Activated CD4-positive, alpha-beta memory T cell treated with anti-CD3 and anti-CD28 coated beads for 36 hours (primary cell): ENCODE measurements at regions of chr4 and their contacts with region 1.

Region 1: GRCh38 chr4:55407119-55407518 is 11.4 kb downstream of the TMEM165 start:
- DNase-seq: no peak
- H3K4me3 Mint-ChIP-seq: no peak overlapping the region
- H3K27ac Mint-ChIP-seq: no peak overlapping the region
- H3K4me1 Mint-ChIP-seq: peaks cover 41% of the 10 kb centered on the region
- H3K27me3 Mint-ChIP-seq: no peaks in the 10 kb centered on the region

Region 2: DNA sequence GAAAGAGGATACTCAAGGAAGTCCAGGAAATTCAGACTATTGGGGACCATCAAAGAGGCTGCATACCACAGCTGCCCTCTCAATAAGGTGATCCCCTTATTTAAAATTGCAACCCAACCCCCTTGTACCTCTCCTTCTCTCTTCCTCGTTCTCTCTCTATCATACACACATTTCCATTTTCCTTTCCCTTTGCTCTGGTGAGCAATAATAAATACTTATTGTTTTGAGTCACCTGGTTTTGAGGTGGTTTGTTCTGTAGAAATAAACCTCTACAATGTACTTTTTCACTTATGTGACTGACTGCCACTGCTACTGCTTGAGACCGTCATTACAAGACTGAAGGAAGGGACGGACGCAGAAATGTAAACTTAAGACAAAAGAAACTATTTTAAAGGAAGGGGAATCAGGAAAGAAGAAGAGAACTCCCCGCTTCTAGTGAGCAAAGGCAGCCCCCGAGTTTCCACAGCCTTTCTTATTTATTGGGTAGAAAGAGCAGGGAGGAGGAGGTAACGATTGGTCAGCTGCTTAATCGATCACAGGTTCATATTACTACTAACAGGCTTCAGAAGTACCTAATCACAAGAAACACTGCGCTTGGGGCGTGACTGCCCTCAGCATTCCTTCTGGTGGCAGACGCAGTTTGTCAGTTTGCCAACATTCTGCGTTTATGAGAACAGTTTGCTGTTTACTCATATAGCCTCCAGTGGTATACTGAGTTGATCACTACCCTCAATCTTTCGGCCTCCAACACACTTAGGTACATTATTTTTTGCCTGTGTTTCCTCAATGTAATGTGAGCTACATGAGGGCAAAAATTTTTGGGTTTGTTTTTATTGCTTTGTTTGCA is 28.3 kb before region 1 on chr4:
- CTCF ChIA-PET with region 1: no interaction called
- POLR2A ChIA-PET with region 1: no interaction called
- intact Hi-C with region 1: loop called (anchors 2 kb)
- DNase-seq: no peak
- H3K4me3 Mint-ChIP-seq: no peak overlapping the region
- H3K27ac Mint-ChIP-seq: no peak overlapping the region
- H3K4me1 Mint-ChIP-seq: no peaks in the 10 kb centered on the region
- H3K27me3 Mint-ChIP-seq: no peaks in the 10 kb centered on the region

Region 3: DNA sequence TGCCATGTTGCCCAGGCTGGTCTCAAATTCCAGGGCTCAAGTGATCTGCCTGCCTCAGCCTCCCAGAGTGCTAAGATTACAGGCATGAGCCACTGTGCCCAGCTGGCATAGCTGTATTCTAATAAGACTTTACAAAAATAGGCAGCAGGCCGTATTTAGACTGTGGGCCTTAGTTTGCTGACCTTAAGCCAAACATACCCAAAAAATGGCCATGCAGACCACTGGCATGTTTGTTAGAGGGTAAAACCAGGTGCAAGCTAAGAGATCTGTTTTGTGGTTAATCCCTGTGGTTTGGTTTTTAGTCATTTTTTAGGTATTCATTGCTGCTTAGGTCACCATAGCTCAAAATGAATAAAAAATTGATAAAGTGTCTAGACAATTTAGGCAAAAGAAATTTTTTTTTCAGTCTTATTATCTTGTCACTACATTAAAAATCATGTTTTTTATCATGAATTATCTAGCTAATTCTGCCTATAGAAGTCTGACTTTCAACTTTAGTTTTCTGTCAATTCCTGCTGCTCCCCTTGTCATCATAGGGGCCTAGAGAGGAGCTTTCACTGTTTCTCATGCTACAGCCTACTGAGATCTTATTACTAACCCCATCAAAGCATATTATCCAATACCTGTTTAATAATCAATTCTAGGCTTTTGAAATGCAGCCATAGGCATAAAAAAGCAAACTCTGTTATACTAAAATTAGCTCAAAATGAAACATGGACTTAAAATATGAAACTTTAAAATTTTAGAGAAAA is 1421.8 kb after region 1 on chr4:
- CTCF ChIA-PET with region 1: no interaction called
- POLR2A ChIA-PET with region 1: no interaction called
- intact Hi-C with region 1: no loop called
- DNase-seq: no peak
- H3K4me3 Mint-ChIP-seq: no peak overlapping the region
- H3K27ac Mint-ChIP-seq: no peak overlapping the region
- H3K4me1 Mint-ChIP-seq: no peaks in the 10 kb centered on the region
- H3K27me3 Mint-ChIP-seq: no peaks in the 10 kb centered on the region